ENCODE measurements at regions of chr19 and their contacts with region 1.

Region 1: GRCh38 chr19:14487370-14488125 is 8.4 kb downstream of the GIPC1 start:
- DNase-seq: no peak
- H3K4me3 ChIP-seq: no peak overlapping the region
- H3K4me3 Mint-ChIP-seq: no peak overlapping the region
- H3K27ac ChIP-seq: no peak overlapping the region
- H3K27ac Mint-ChIP-seq: no peak overlapping the region
- H3K4me1 ChIP-seq: peaks cover 5% of the 10 kb centered on the region
- H3K4me1 Mint-ChIP-seq: peaks cover 7 to 9% (median 7%) of the 10 kb centered on the region in 3 donors
- H3K27me3 ChIP-seq: no peaks in the 10 kb centered on the region
- H3K27me3 Mint-ChIP-seq: no peaks in the 10 kb centered on the region

Region 2: DNA sequence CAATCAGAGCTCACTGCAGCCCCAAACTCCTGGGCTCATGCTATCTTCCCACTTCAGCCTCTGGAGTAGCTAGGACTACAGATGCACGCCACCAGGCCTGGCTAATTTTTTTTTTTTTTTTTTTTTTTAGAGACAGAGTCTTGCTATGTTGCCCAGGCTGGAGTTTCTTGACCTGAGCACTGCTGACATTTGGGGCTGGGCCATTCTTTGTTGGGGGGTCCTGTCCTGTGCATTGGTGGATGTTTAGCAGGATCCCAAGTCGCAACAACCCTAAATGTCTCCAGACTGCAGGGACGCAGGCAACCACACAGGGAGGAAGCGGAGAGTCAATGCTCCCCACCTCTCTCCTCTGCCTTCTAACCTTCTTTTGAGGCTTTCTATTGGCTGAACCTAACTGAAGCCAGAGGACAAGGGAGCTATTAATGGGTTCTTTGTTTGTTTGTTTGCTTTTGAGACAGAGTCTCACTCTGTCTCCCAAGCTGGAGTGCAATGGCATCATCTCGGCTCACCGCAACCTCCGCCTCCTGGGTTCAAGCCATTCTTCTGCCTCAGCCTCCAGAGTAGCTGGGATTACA is 164.6 kb before region 1 on chr19:
- CTCF ChIA-PET with region 1: no interaction called
- POLR2A ChIA-PET with region 1: interaction called, 14 read pairs
- DNase-seq: no peak
- H3K4me3 ChIP-seq: no peak overlapping the region
- H3K4me3 Mint-ChIP-seq: no peak overlapping the region
- H3K27ac ChIP-seq: no peak overlapping the region
- H3K27ac Mint-ChIP-seq: peak overlapping the region in 2 of 8 donors; percentile 46 to 57
- H3K4me1 ChIP-seq: no peaks in the 10 kb centered on the region
- H3K4me1 Mint-ChIP-seq: no peaks in the 10 kb centered on the region
- H3K27me3 ChIP-seq: no peaks in the 10 kb centered on the region
- H3K27me3 Mint-ChIP-seq: no peaks in the 10 kb centered on the region

Region 3: DNA sequence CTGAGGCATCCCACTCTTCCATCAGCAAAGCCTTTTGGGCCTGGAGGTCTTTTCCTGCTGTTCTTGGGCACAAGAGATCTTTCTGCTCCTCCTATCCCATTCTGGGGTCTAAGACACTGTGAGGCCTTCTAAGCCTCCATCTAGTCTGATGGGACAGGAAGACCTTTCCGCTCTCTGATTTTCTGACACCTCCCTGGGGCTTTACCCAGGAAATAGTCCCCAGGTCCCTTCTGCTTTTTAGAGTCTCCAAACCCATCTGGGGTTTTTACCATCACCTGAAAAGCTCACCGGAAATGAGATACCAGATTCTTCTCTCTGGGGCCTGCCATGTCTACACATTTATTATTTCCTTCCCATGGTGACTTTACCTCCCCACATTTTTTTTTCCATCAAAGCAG is 116.4 kb after region 1 on chr19:
- CTCF ChIA-PET with region 1: no interaction called
- POLR2A ChIA-PET with region 1: no interaction called
- DNase-seq: no peak
- H3K4me3 ChIP-seq: no peak overlapping the region
- H3K4me3 Mint-ChIP-seq: peak overlapping the region in 1 of 7 donors; percentile 26
- H3K27ac ChIP-seq: no peak overlapping the region
- H3K27ac Mint-ChIP-seq: peak overlapping the region in 3 of 8 donors; percentile 29 to 37 (median 30)
- H3K4me1 ChIP-seq: no peaks in the 10 kb centered on the region
- H3K4me1 Mint-ChIP-seq: peaks cover 0 to 7% (median 2%) of the 10 kb centered on the region in 3 donors
- H3K27me3 ChIP-seq: no peaks in the 10 kb centered on the region
- H3K27me3 Mint-ChIP-seq: peaks cover 3 to 19% of the 10 kb centered on the region in 2 donors

Measured in CD8-positive, alpha-beta memory T cell (primary cell).